ENCODE measurements at regions of chr3 and their contacts with region 1.

Region 1: GRCh38 chr3:122754929-122755328 is 38.7 kb downstream of the HSPBAP1 start:
- DNase-seq: peak; percentile 51
- ATAC-seq: peak; percentile 96
- H3K4me3 ChIP-seq: no peak overlapping the region
- H3K27ac ChIP-seq: no peak overlapping the region
- H3K4me1 ChIP-seq: no peaks in the 10 kb centered on the region
- H3K27me3 ChIP-seq: no peaks in the 10 kb centered on the region
- CTCF ChIP-seq: peak; percentile 86
- EP300 ChIP-seq: no peak
- POLR2A ChIP-seq: no peak
- RAD21 ChIP-seq: peak; percentile 69

Region 2: GRCh38 chr3:122705379-122705778 is 49.5 kb before region 1 on chr3:
- CTCF ChIA-PET with region 1: no interaction called
- POLR2A ChIA-PET with region 1: no interaction called
- in situ Hi-C with region 1: no loop called
- intact Hi-C with region 1: no loop called
- DNase-seq: no peak
- ATAC-seq: no peak
- H3K4me3 ChIP-seq: no peak overlapping the region
- H3K27ac ChIP-seq: no peak overlapping the region
- H3K4me1 ChIP-seq: peaks cover 7% of the 10 kb centered on the region
- H3K27me3 ChIP-seq: no peaks in the 10 kb centered on the region
- CTCF ChIP-seq: no peak
- EP300 ChIP-seq: no peak
- POLR2A ChIP-seq: no peak
- RAD21 ChIP-seq: no peak

Region 3: DNA sequence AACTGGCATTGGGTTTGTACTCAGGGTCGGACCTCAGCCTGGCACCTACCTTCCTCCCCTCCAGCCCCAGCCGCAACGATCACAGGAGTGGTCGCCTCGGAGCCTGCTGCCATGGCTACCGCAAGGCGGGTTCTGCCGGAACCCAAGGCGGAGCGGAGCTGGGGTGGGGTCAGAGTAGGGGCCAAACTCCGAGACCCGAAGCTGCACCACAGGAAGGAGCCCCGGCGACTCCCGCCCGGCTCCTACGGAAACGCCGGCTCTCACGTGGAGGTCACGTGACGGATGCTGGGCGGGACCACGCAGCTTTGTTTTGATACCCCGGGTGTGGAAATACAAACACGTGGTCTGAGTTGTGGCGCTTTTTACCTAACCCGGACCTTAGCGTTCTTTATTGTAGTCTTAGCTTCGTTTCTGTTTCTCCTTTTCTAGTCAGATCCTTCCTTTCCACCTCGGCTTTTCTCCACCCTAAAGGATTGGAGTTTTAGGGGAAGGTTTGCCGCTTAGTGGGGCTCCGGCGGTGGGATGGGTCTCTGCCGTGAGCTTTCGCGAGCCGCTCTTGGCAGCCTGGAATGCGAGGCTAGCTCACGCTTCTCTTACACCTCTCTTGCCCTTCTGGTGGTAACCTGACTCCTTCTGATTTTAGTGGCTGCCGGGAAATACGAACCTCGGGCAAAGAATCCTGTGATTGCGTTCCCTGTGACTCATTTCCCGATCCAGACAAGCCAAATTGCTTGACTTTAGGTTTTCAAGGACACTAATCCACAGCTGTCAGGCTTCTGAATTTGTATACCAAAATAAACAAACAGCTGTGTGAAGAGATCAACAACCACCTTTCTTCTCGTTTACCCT is 38.9 kb after region 1 on chr3 and contains the start of gene HSPBAP1:
- CTCF ChIA-PET with region 1: no interaction called
- POLR2A ChIA-PET with region 1: no interaction called
- in situ Hi-C with region 1: no loop called
- intact Hi-C with region 1: loop called (anchors 2 kb)
- DNase-seq: peak; percentile 84
- ATAC-seq: peak; percentile 70
- H3K4me3 ChIP-seq: peak within 1 kb of the TSS; percentile 68 to 83 (median 75)
- H3K27ac ChIP-seq: peak within 1 kb of the TSS; percentile 86
- H3K4me1 ChIP-seq: peaks cover 54% of the 10 kb centered on the region
- H3K27me3 ChIP-seq: no peaks in the 10 kb centered on the region
- CTCF ChIP-seq: no peak
- EP300 ChIP-seq: no peak
- POLR2A ChIP-seq: peak; percentile 60 to 66; a peak in 3 of 4 replicates
- RAD21 ChIP-seq: peak; percentile 56; the same call in 1 of the 2 replicates
- total RNA-seq, gene HSPBAP1: 5.1 and 5.7 TPM in 2 replicates

Region 4: DNA sequence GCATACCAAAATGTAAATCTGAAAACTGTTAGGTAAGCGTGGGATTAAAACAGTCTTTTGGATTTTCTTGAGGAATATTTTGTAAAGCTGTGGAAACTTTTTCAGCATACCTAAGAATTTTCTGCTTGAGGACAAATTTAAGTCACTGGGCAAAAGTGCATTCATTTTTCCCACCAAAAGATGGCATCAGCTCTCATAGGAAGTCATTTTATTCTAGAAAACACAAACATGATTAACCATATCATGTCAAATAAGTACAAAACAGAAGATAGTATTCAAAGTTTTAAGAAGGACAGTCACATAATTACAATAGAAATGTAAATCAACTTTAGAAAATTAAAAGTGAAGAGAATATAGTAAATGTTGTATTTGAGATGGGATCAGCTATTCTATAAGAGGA is 103.4 kb after region 1 on chr3:
- CTCF ChIA-PET with region 1: no interaction called
- POLR2A ChIA-PET with region 1: no interaction called
- in situ Hi-C with region 1: no loop called
- intact Hi-C with region 1: loop called (anchors 10 kb)
- DNase-seq: peak; percentile 12
- ATAC-seq: no peak
- H3K4me3 ChIP-seq: no peak overlapping the region
- H3K27ac ChIP-seq: no peak overlapping the region
- H3K4me1 ChIP-seq: peaks cover 20% of the 10 kb centered on the region
- H3K27me3 ChIP-seq: no peaks in the 10 kb centered on the region
- CTCF ChIP-seq: peak; percentile 48
- EP300 ChIP-seq: no peak
- POLR2A ChIP-seq: no peak
- RAD21 ChIP-seq: no peak

Region 5: DNA sequence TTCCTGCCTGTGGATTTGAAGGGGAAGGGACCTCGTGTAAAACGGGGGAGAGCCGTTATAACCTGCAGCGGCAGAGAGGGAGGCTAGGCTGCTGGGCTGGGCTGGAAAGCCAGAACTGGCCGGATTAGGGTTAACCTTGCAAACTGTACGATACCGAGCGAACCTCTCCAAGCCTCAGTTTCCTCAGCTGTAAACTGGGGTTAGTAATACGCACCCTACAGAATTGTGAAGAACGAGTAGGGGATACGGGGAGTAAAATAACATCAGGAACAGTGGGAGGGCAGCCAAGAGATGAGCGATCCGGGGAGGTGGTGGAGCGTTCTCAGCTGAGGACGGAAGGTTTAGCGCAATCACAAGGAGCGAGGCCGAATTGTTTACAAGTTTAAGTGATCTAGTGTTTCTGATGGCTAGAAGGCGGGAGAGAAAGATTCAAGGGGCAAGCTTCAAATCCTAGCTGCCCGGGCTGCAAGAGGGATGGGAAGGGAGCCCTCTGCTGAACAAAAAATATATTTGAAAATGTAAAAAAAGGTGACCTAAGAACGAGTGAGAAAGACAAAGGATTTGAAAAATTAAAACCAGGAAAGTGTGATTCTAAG is 273.4 kb after region 1 on chr3:
- CTCF ChIA-PET with region 1: interaction called, 4 read pairs
- POLR2A ChIA-PET with region 1: no interaction called
- in situ Hi-C with region 1: loop called (anchors 25 kb)
- intact Hi-C with region 1: loop called (anchors 1 kb)
- DNase-seq: peak; percentile 13
- ATAC-seq: peak; percentile 39
- H3K4me3 ChIP-seq: peak overlapping the region; percentile 54 to 69 (median 57)
- H3K27ac ChIP-seq: no peak overlapping the region
- H3K4me1 ChIP-seq: peaks cover 33% of the 10 kb centered on the region
- H3K27me3 ChIP-seq: peaks cover 13 to 62% of the 10 kb centered on the region in 2 experiments
- CTCF ChIP-seq: peak; percentile 62
- EP300 ChIP-seq: no peak
- POLR2A ChIP-seq: no peak
- RAD21 ChIP-seq: peak; percentile 22; the same call in 1 of the 2 replicates